ENCODE measurements at regions of chr2 and their contacts with region 1.

Region 1: DNA sequence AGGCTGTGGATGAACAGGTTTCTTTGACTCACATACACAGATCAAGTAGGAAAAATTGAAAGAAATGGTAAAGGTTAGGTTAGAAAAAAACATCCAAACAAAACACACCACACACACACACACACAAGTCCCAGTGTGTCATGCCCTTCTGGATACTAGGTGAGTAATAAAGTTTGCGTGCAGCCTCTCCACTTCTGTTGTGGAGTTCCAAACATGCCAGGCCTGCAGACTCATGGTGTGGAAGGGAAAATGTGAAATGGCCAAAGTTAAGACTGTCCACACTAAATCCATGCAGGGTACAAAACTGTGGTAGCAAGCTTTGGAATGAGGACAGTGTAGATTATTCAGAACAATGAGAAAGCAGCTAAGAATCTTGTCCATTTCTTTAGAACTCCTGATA is 114.6 kb downstream of the IKZF2 start:
- DNase-seq: no peak
- ATAC-seq: no peak
- H3K4me3 ChIP-seq: no peak overlapping the region
- H3K4me3 Mint-ChIP-seq: no peak overlapping the region
- H3K27ac ChIP-seq: peak overlapping the region in 1 of 2 experiments; percentile 34
- H3K27ac Mint-ChIP-seq: peak overlapping the region; percentile 22
- H3K4me1 ChIP-seq: no peaks in the 10 kb centered on the region
- H3K4me1 Mint-ChIP-seq: peaks cover 45% of the 10 kb centered on the region
- H3K27me3 ChIP-seq: no peaks in the 10 kb centered on the region
- H3K27me3 Mint-ChIP-seq: no peaks in the 10 kb centered on the region
- CTCF ChIP-seq: no peak

Region 2: GRCh38 chr2:212968280-212968679 is 68.6 kb before region 1 on chr2:
- CTCF ChIA-PET with region 1: no interaction called
- POLR2A ChIA-PET with region 1: no interaction called
- intact Hi-C with region 1: loop called in 1 of 2 experiments (anchors 5 kb)
- DNase-seq: no peak
- ATAC-seq: no peak
- H3K4me3 ChIP-seq: no peak overlapping the region
- H3K4me3 Mint-ChIP-seq: no peak overlapping the region
- H3K27ac ChIP-seq: no peak overlapping the region
- H3K27ac Mint-ChIP-seq: peak overlapping the region; percentile 46
- H3K4me1 ChIP-seq: no peaks in the 10 kb centered on the region
- H3K4me1 Mint-ChIP-seq: peaks cover 10% of the 10 kb centered on the region
- H3K27me3 ChIP-seq: no peaks in the 10 kb centered on the region
- H3K27me3 Mint-ChIP-seq: no peaks in the 10 kb centered on the region
- CTCF ChIP-seq: no peak

Measured in CD8-positive, alpha-beta T cell (primary cell).